Activated CD4-positive, alpha-beta memory T cell treated with anti-CD3 and anti-CD28 coated beads for 36 hours (primary cell): ENCODE measurements at regions of chr21 and their contacts with region 1.

Region 1: GRCh38 chr21:35084869-35085268 is 35.8 kb upstream of the RUNX1 start:
- DNase-seq: no peak
- H3K4me3 Mint-ChIP-seq: no peak overlapping the region
- H3K27ac Mint-ChIP-seq: no peak overlapping the region
- H3K4me1 Mint-ChIP-seq: peaks cover 39% of the 10 kb centered on the region
- H3K27me3 Mint-ChIP-seq: no peaks in the 10 kb centered on the region

Region 2: GRCh38 chr21:34707876-34708325 is 377.0 kb before region 1 on chr21:
- CTCF ChIA-PET with region 1: no interaction called
- POLR2A ChIA-PET with region 1: interaction called, 3 read pairs
- intact Hi-C with region 1: loop called (anchors 5 kb)
- DNase-seq: peak; percentile 85
- H3K4me3 Mint-ChIP-seq: no peak overlapping the region
- H3K27ac Mint-ChIP-seq: peak overlapping the region; percentile 15
- H3K4me1 Mint-ChIP-seq: peaks cover 20% of the 10 kb centered on the region
- H3K27me3 Mint-ChIP-seq: peaks cover 41% of the 10 kb centered on the region

Region 3: GRCh38 chr21:34946916-34947534 is 137.8 kb before region 1 on chr21:
- CTCF ChIA-PET with region 1: no interaction called
- POLR2A ChIA-PET with region 1: no interaction called
- intact Hi-C with region 1: no loop called
- DNase-seq: no peak
- H3K4me3 Mint-ChIP-seq: no peak overlapping the region
- H3K27ac Mint-ChIP-seq: peak overlapping the region; percentile 88
- H3K4me1 Mint-ChIP-seq: peaks cover 90% of the 10 kb centered on the region
- H3K27me3 Mint-ChIP-seq: no peaks in the 10 kb centered on the region

Region 4: GRCh38 chr21:35020902-35021301 is 64.0 kb before region 1 on chr21:
- CTCF ChIA-PET with region 1: no interaction called
- POLR2A ChIA-PET with region 1: interaction called, 4 read pairs
- intact Hi-C with region 1: loop called (anchors 1 kb)
- DNase-seq: no peak
- H3K4me3 Mint-ChIP-seq: no peak overlapping the region
- H3K27ac Mint-ChIP-seq: peak overlapping the region; percentile 65
- H3K4me1 Mint-ChIP-seq: peaks cover 85% of the 10 kb centered on the region
- H3K27me3 Mint-ChIP-seq: no peaks in the 10 kb centered on the region

Region 5: DNA sequence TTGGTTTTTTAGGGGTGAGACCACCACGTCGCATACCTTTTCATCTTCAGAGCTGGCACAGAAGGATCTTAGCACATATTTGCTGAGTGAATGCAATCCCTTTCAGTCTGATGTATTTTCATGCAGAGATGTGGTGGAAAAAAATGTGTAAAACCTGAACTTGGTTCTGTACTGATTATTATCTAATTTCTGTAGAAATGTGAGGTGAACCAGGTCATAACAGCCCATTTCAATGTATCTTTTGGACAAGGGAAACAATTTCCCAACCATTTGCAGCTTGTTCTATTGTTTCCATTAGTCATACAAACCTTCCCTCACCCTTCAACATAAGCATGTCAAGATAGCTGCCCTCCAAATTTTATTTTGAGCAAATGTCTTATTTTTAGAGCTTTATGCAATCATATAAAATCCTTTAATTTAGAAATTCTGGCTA is 11.0 kb after region 1 on chr21:
- CTCF ChIA-PET with region 1: interaction called, 16 read pairs
- POLR2A ChIA-PET with region 1: interaction called, 35 read pairs
- intact Hi-C with region 1: loop called (anchors 1 kb)
- DNase-seq: peak; percentile 42
- H3K4me3 Mint-ChIP-seq: no peak overlapping the region
- H3K27ac Mint-ChIP-seq: peak overlapping the region; percentile 83
- H3K4me1 Mint-ChIP-seq: peaks cover 48% of the 10 kb centered on the region
- H3K27me3 Mint-ChIP-seq: peaks cover 2% of the 10 kb centered on the region

Region 6: DNA sequence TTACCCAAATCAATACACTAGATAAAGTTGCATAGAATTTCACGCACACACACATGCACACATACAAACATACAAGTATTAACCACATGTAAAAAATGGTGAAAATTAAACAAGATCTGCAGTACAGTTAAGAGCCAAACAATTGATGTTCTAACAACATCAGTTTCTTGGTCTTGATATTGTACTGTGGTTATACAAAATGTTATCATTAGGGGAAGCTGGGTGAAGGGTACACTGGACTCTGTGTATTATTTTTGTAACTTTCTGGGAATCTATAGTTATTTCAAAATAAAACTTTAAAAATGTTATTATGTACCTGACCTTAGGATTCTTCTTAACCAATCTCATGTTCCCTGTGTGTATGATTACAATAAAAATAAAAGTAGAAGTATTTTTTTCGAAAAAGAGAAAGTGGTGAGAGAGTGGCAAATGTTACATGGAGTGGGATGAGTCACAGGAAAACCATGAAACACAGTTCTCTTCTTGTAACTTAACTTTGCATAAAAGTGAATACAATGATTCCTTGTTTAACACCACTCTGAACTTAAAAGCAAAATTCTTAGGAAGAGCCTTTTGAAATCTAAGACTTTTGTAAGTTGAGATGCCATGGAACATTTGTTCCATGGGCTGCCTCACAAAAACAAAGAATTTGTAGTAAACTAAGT is 65.8 kb after region 1 on chr21:
- CTCF ChIA-PET with region 1: no interaction called
- POLR2A ChIA-PET with region 1: no interaction called
- intact Hi-C with region 1: loop called (anchors 2 kb)
- DNase-seq: no peak
- H3K4me3 Mint-ChIP-seq: peak overlapping the region; percentile 6
- H3K27ac Mint-ChIP-seq: peak overlapping the region; percentile 90
- H3K4me1 Mint-ChIP-seq: peaks cover 51% of the 10 kb centered on the region
- H3K27me3 Mint-ChIP-seq: peaks cover 1% of the 10 kb centered on the region

Region 7: DNA sequence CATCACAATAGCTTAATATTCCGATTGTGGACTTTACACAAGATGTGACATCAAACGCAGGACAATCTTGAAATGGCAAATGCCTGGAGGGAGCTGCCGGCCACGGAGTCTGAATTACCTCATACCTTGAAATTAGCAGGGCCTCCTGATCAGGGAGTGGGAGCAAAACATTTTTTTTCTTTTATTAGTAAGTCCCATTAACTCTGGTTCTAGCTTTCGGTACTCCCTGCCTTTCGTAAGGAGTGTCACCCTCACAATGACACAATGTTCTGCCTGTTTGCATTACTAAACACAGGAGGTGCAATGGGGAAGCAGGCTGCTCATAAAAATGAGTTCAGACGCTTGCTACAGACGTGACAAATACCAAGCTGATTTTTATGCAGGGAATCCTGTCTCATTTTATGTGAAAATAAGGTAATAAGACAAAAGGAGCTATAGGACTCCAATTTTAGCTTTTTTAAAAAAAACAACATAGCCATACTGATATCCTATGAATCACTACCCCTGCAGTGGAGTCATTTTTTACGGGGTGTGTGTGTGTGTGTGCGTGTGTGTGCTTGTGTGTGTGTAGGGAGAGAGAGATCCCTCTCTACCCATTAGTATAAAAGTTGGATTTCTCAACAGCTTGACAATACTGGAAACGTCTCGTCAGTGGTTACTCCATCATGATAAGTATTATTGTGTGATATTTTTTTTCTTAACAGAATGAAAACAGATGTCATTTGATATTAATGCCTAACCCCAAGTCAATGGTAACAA is 169.3 kb after region 1 on chr21:
- CTCF ChIA-PET with region 1: no interaction called
- POLR2A ChIA-PET with region 1: interaction called, 7 read pairs
- intact Hi-C with region 1: loop called (anchors 2 kb)
- DNase-seq: no peak
- H3K4me3 Mint-ChIP-seq: no peak overlapping the region
- H3K27ac Mint-ChIP-seq: no peak overlapping the region
- H3K4me1 Mint-ChIP-seq: peaks cover 43% of the 10 kb centered on the region
- H3K27me3 Mint-ChIP-seq: no peaks in the 10 kb centered on the region